ENCODE measurements at regions of chr12 and their contacts with region 1.

Region 1: DNA sequence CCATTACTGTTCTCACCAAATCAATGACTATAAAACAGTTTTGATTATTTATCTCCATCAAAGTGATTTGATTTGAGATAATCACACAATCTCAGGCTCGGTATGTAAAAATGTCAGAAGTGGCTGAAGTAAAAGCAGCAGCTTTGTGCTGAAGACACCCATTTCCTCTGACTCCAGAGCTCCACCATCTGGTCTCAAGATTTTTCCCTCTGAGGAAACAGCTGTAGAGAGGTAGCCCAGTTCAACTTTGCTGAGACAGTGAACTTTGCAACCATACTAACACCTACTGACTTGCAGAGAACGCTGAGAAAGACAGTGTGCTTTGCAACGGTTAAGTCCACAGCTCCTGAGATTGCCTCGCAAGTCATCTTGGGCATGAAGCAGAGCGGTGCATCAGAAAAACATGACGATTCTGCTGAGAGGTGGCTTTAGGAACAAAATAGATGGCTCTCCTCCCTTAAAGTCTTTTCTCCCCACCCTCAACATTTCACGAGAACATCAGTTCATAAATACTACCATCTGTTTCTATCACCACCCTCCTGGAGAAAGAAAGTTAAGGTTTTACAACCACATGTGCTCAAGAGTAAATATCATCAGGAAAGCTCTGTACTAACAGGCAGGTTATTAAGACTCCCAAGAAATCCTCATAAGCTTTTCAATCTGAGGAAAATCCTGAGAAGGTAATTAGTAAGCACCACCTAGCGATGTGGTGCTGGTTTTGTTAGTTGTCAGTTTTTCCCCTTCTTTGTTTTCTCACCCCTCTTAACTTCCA is 34.8 kb downstream of the HIGD1C start:
- ATAC-seq: peak; percentile 49 to 93 (median 74)
- H3K4me3 ChIP-seq: no peak overlapping the region
- H3K27ac ChIP-seq: no peak overlapping the region
- H3K4me1 ChIP-seq: no peaks in the 10 kb centered on the region

Region 2: DNA sequence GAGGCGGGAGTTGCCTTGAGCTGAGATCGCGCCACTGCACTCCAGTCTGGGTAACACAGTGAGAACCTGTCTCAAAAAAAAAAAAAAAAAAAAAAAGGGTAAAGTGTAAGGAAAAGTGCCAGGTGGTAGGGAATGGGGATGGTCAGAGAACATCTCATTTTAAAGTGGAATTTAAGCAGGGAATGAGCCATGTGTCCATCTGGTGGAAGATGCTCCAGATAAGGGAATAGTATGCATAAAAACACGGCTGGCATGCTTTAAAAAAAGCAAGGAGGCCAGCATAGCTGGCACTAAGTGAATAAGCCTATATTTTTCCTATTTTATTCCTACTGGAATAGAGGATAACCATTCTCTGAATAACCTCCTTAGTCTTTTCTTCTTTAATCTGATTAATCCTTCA is 624.5 kb before region 1 on chr12:
- in situ Hi-C with region 1: no loop called
- ATAC-seq: no peak
- H3K4me3 ChIP-seq: no peak overlapping the region
- H3K27ac ChIP-seq: no peak overlapping the region
- H3K4me1 ChIP-seq: peaks cover 0 to 9% of the 10 kb centered on the region in 2 donors

Region 3: DNA sequence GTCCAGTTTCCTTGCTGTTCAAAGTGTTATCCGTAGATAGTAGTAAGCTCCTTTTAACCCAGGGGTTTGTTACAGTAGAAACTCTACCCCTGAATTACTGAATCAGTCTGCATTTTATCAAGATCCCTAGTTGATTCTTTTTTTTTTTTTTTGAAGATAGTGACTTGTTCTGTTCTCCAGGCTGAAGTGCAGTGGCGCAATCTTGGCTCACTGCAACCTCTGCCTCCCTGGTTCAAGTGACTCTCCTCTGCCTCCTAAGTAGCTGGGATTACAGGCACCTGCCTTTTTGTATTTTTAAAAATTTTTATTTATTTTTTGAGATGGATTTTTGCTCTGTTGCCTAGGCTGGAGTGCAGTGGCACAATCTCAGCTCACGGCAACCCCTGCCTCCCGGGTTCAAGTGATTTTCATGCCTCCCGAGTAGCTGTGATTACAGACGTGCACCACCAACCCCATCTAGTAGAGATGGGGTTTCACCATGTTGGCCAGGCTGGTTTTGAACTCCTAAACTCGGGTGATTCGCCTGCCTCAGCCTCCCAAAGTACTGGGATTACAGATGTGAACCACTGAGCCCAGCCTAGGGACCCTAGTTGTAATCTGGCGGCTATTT is 576.0 kb before region 1 on chr12:
- in situ Hi-C with region 1: no loop called
- ATAC-seq: no peak
- H3K4me3 ChIP-seq: no peak overlapping the region
- H3K27ac ChIP-seq: no peak overlapping the region
- H3K4me1 ChIP-seq: no peaks in the 10 kb centered on the region

Region 4: GRCh38 chr12:50763639-50764285 is 223.4 kb before region 1 on chr12 and contains the start of gene ATF1:
- in situ Hi-C with region 1: loop called in 1 of 9 experiments (anchors 25 kb)
- ATAC-seq: peak; percentile 84 to 90 (median 86)
- H3K4me3 ChIP-seq: peak within 1 kb of the TSS; percentile 75 to 96 (median 95)
- H3K27ac ChIP-seq: peak within 1 kb of the TSS; percentile 99
- H3K4me1 ChIP-seq: peaks cover 9 to 14% of the 10 kb centered on the region in 2 donors
- total RNA-seq, gene ATF1: 8.4 to 24.3 (median 15.0) TPM